K562 (cell line): ENCODE measurements at regions of chr9 and their contacts with region 1.

Region 1: GRCh38 chr9:94166237-94166963 is 82.1 kb downstream of the PTPDC1 start:
- DNase-seq: peak; percentile 87 to 99 (median 92)
- ATAC-seq: peak; percentile 68
- H3K4me3 ChIP-seq: peak overlapping the region; percentile 68
- H3K27ac ChIP-seq: peak overlapping the region; percentile 99
- H3K4me1 ChIP-seq: peaks cover 7 to 17% of the 10 kb centered on the region in 2 experiments; a peak in 4 of 5 replicates
- H3K27me3 ChIP-seq: no peaks in the 10 kb centered on the region
- CTCF ChIP-seq: peak in 2 of 3 experiments; percentile 25 to 27; a peak in 1 of 6 replicates
- EP300 ChIP-seq: no peak; the same call in 1 of the 2 replicates
- POLR2A ChIP-seq: peak; percentile 24
- RAD21 ChIP-seq: no peak

Region 2: GRCh38 chr9:94014065-94014654 is 152.2 kb before region 1 on chr9:
- CTCF ChIA-PET with region 1: no interaction called
- POLR2A ChIA-PET with region 1: interaction called, 3 read pairs
- in situ Hi-C with region 1: no loop called
- intact Hi-C with region 1: loop called (anchors 5 kb)
- DNase-seq: peak; percentile 44 to 50 (median 48)
- ATAC-seq: peak; percentile 78
- H3K4me3 ChIP-seq: no peak overlapping the region
- H3K27ac ChIP-seq: no peak overlapping the region
- H3K4me1 ChIP-seq: no peaks in the 10 kb centered on the region
- H3K27me3 ChIP-seq: peaks cover 0 to 9% of the 10 kb centered on the region in 2 experiments; a peak in 4 of 5 replicates
- CTCF ChIP-seq: peak; percentile 47 to 65 (median 56)
- EP300 ChIP-seq: no peak
- POLR2A ChIP-seq: no peak
- RAD21 ChIP-seq: peak; percentile 43 to 79

Region 3: GRCh38 chr9:94065535-94065961 is 100.9 kb before region 1 on chr9:
- CTCF ChIA-PET with region 1: no interaction called
- POLR2A ChIA-PET with region 1: interaction called, 3 read pairs
- in situ Hi-C with region 1: no loop called
- intact Hi-C with region 1: loop called (anchors 2 kb)
- DNase-seq: peak; percentile 44 to 88 (median 54)
- ATAC-seq: peak; percentile 95
- H3K4me3 ChIP-seq: no peak overlapping the region
- H3K27ac ChIP-seq: no peak overlapping the region
- H3K4me1 ChIP-seq: peaks cover 0 to 5% of the 10 kb centered on the region in 2 experiments; a peak in 2 of 5 replicates
- H3K27me3 ChIP-seq: no peaks in the 10 kb centered on the region; a peak in 1 of 5 replicates
- CTCF ChIP-seq: peak; percentile 78 to 88 (median 84)
- EP300 ChIP-seq: no peak
- POLR2A ChIP-seq: no peak
- RAD21 ChIP-seq: peak; percentile 83 to 96

Region 4: DNA sequence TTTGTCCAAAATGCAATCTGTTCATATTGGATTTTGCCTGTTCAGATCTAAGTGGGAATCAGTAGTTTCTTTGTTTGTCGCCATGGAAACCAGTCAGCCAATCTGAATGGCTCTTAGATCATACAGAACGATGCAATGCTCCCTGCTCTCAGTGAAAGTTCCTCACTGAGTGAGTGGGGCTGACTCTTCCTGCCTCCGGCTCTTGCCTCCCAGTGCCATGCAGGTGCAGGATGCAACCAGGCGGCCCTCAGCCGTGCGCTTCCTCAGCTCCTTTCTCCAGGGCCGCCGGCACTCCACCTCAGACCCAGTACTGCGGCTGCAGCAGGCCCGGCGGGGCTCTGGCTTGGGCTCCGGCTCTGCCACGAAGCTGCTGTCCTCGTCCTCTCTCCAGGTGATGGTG is 82.1 kb before region 1 on chr9 and contains the start of gene PTPDC1:
- CTCF ChIA-PET with region 1: no interaction called
- POLR2A ChIA-PET with region 1: interaction called, 3 read pairs
- in situ Hi-C with region 1: no loop called
- intact Hi-C with region 1: loop called (anchors 5 kb)
- DNase-seq: peak; percentile 19 to 60 (median 42)
- ATAC-seq: peak; percentile 85
- H3K4me3 ChIP-seq: no peak within 1 kb of the TSS
- H3K27ac ChIP-seq: peak within 1 kb of the TSS; percentile 3; the same call in 2 of the 3 replicates
- H3K4me1 ChIP-seq: peaks cover 8 to 20% of the 10 kb centered on the region in 2 experiments; a peak in 4 of 5 replicates
- H3K27me3 ChIP-seq: no peaks in the 10 kb centered on the region
- CTCF ChIP-seq: no peak
- EP300 ChIP-seq: no peak
- POLR2A ChIP-seq: no peak
- RAD21 ChIP-seq: no peak
- polyA plus RNA-seq, gene PTPDC1: 1.1 to 1.9 TPM

Region 5: GRCh38 chr9:94110821-94111252 is 55.6 kb before region 1 on chr9:
- CTCF ChIA-PET with region 1: no interaction called
- POLR2A ChIA-PET with region 1: interaction called, 3 read pairs
- in situ Hi-C with region 1: no loop called
- intact Hi-C with region 1: loop called (anchors 2 kb)
- DNase-seq: peak in 2 of 4 experiments; percentile 59 to 78
- ATAC-seq: peak; percentile 65
- H3K4me3 ChIP-seq: no peak overlapping the region
- H3K27ac ChIP-seq: peak overlapping the region; percentile 60
- H3K4me1 ChIP-seq: peaks cover 13 to 34% of the 10 kb centered on the region in 2 experiments
- H3K27me3 ChIP-seq: no peaks in the 10 kb centered on the region
- CTCF ChIP-seq: no peak
- EP300 ChIP-seq: peak; percentile 84; the same call in 1 of the 2 replicates
- POLR2A ChIP-seq: no peak
- RAD21 ChIP-seq: no peak

Region 6: GRCh38 chr9:94178927-94179326 is 12.5 kb after region 1 on chr9:
- CTCF ChIA-PET with region 1: no interaction called
- POLR2A ChIA-PET with region 1: interaction called, 10 read pairs
- in situ Hi-C with region 1: no loop called
- intact Hi-C with region 1: no loop called
- DNase-seq: no peak
- ATAC-seq: no peak
- H3K4me3 ChIP-seq: no peak overlapping the region
- H3K27ac ChIP-seq: no peak overlapping the region
- H3K4me1 ChIP-seq: no peaks in the 10 kb centered on the region; a peak in 1 of 5 replicates
- H3K27me3 ChIP-seq: no peaks in the 10 kb centered on the region
- CTCF ChIP-seq: no peak
- EP300 ChIP-seq: no peak
- POLR2A ChIP-seq: no peak; the same call in 1 of the 2 replicates
- RAD21 ChIP-seq: no peak